ENCODE measurements at regions of chr6 and their contacts with region 1.

Region 1: DNA sequence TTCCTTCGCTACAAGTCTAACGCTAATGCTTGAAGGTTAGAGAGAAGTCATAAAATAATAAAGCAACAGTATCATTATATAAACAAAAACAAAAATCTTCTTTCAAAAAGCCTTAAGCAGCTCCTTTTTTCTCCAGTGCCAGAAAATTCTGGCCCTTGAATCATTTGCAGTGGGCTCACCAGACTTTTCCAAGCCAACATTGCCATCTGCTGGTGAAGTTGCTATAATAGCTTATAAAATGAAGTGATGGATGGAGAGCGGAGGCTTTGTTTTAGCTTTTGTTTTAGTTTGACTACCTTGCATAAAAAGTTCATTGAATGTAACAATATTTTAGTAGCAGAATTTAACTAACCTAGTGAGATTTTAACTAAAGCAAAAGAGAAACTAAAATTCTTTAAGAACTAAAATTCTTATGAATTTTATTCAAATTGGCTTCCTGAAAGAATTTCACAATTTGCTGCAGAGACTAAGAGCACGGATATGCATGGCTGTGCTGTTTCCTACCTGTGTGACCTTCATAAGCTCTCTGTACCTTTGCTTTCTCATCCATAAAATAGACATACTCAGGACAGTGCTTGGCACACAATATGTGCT is 44.8 kb upstream of the SLC2A12 start:
- DNase-seq: peak; percentile 70
- H3K4me3 ChIP-seq: no peak overlapping the region
- H3K27ac ChIP-seq: no peak overlapping the region
- H3K4me1 ChIP-seq: no peaks in the 10 kb centered on the region
- CTCF ChIP-seq: peak; percentile 93

Region 2: DNA sequence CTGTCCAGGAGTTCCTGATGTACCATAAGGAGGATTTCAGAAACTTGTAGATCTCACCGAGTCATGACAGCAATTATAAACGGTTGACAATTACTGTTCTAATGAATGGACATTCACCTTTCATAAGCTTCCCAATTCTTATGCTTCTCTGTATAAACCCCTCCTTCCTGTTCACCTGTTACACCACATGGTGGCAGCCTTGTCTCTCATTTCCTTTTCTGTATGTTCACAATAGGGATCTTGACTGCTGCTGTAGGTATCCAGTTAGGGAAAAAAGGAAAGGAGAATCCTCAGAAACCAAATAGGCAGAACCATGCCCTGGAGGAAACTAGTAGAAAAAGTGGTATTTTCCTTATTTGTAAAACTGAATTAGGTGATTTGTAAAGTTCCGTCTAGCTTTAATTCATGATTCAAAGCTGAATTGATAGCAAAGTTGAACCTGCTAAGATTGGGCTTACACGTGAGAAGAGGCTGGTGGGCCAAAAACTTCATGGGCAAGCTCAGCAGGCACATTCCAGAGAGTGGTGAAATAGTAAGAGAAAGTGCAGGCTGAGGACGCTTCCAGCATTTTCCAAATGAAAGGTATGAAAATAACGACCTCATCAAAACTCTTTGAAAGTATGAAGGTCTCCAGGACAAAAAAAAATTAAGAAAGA is 173.1 kb before region 1 on chr6:
- CTCF ChIA-PET with region 1: interaction called, 29 read pairs
- POLR2A ChIA-PET with region 1: interaction called, 6 read pairs
- intact Hi-C with region 1: loop called (anchors 1 kb)
- DNase-seq: peak; percentile 69
- H3K4me3 ChIP-seq: no peak overlapping the region
- H3K27ac ChIP-seq: no peak overlapping the region
- H3K4me1 ChIP-seq: no peaks in the 10 kb centered on the region
- CTCF ChIP-seq: peak; percentile 98

Region 3: GRCh38 chr6:134014588-134015137 is 82.5 kb before region 1 on chr6:
- CTCF ChIA-PET with region 1: no interaction called
- POLR2A ChIA-PET with region 1: no interaction called
- intact Hi-C with region 1: no loop called
- DNase-seq: no peak
- H3K4me3 ChIP-seq: no peak overlapping the region
- H3K27ac ChIP-seq: no peak overlapping the region
- H3K4me1 ChIP-seq: no peaks in the 10 kb centered on the region
- CTCF ChIP-seq: no peak

Region 4: GRCh38 chr6:134063966-134064445 is 33.2 kb before region 1 on chr6:
- CTCF ChIA-PET with region 1: interaction called, 5 read pairs
- POLR2A ChIA-PET with region 1: interaction called, 4 read pairs
- intact Hi-C with region 1: loop called (anchors 1 kb)
- DNase-seq: peak; percentile 69
- H3K4me3 ChIP-seq: no peak overlapping the region
- H3K27ac ChIP-seq: no peak overlapping the region
- H3K4me1 ChIP-seq: no peaks in the 10 kb centered on the region
- CTCF ChIP-seq: peak; percentile 90

Measured in OCI-LY7 (cell line).